Psoas muscle (tissue), 8 donors: ENCODE measurements at regions of chr5 and their contacts with region 1.

Region 1: GRCh38 chr5:188488-189481 is 2.5 kb upstream of the LRRC14B start:
- DNase-seq: peak; percentile 92 to 96
- ATAC-seq: peak; percentile 75 to 77 (median 77)
- H3K4me3 ChIP-seq: peak overlapping the region; percentile 47
- H3K27ac ChIP-seq: peak overlapping the region; percentile 97
- H3K4me1 ChIP-seq: peaks cover 41% of the 10 kb centered on the region
- H3K27me3 ChIP-seq: no peaks in the 10 kb centered on the region
- CTCF ChIP-seq: peak; percentile 94

Region 2: DNA sequence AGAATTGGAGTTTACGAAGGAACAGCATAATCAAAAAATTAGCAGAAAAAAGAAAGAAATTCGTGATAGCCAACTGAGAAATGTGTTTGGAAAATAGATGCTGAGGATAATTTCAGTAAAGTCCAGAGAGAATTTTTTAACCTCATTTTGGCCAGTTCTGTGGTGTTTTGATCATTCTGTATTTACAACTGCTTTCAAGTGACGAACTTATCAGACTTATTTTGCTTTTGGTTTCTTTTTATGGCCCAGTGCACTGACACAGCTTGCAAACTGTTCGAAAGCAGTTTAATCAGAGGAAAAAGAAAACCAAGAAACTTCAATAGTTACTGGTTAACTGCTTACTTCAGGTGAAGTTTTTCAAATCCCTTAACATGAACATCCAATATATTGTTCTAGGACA is 31.2 kb after region 1 on chr5:
- intact Hi-C with region 1: loop called in 1 of 2 experiments (anchors 5 kb)
- DNase-seq: no peak
- ATAC-seq: no peak
- H3K4me3 ChIP-seq: peak overlapping the region; percentile 78
- H3K27ac ChIP-seq: peak overlapping the region; percentile 94
- H3K4me1 ChIP-seq: peaks cover 42% of the 10 kb centered on the region
- H3K27me3 ChIP-seq: no peaks in the 10 kb centered on the region
- CTCF ChIP-seq: no peak

Region 3: GRCh38 chr5:270340-270739 is 81.6 kb after region 1 on chr5:
- intact Hi-C with region 1: loop called in 1 of 2 experiments (anchors 2 kb)
- DNase-seq: no peak
- ATAC-seq: no peak
- H3K4me3 ChIP-seq: peak overlapping the region; percentile 99
- H3K27ac ChIP-seq: peak overlapping the region; percentile 96
- H3K4me1 ChIP-seq: peaks cover 14% of the 10 kb centered on the region
- H3K27me3 ChIP-seq: no peaks in the 10 kb centered on the region
- CTCF ChIP-seq: no peak

Region 4: GRCh38 chr5:317086-317811 is 128.5 kb after region 1 on chr5:
- intact Hi-C with region 1: loop called in 1 of 2 experiments (anchors 5 kb)
- DNase-seq: no peak
- ATAC-seq: peak; percentile 33 to 61 (median 42)
- H3K4me3 ChIP-seq: no peak overlapping the region
- H3K27ac ChIP-seq: no peak overlapping the region
- H3K4me1 ChIP-seq: no peaks in the 10 kb centered on the region
- H3K27me3 ChIP-seq: peaks cover 0 to 36% (median 8%) of the 10 kb centered on the region in 3 donors
- CTCF ChIP-seq: peak; percentile 19